PC-9 (cell line): ENCODE measurements at regions of chr1 and their contacts with region 1.

Region 1: DNA sequence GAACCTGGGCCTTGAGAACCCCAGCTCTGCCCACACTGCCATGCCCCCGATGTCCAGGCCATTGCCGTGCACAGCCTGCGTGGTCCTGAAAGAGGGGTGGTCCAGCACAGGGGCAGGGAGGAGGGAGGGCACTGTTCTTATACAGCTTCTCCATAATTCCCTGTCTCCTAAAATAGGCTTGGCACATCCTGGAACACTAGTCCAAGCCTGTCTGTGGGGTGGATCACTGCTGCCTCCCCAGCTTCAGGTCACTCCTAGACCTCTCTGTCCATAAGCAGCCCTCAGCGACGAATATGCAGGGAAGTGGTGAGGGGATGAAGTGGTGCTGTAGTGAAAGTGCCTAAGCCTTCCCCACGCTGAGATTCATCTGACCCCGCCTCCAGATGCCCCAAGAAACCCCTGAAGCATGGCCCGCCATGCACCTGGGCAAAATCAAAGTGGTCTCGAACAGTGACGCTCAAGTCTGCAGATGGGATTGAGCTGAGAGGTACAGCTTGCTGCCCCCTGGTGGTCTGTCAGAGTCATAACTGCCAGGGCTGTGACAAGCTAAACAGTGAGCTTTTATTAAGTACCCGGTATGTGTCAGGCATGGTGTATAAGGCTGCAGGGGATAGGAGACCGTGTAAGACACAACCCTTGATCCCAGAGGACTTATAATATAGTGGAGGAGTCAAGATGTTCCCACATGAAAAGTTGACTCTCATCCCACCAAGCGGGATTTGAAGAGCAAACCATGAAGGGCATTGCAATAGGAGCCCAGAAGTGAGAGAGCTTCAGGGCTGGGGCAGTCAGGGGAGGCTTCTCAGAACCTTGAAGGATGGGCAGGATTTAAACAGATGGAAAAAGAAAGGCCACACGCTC is 66.6 kb downstream of the FAM163A start:
- DNase-seq: peak; percentile 46 to 53
- H3K4me3 ChIP-seq: no peak overlapping the region
- H3K27ac ChIP-seq: no peak overlapping the region
- H3K4me1 ChIP-seq: no peaks in the 10 kb centered on the region
- H3K27me3 ChIP-seq: peaks cover 46% of the 10 kb centered on the region
- CTCF ChIP-seq: peak; percentile 93

Region 2: DNA sequence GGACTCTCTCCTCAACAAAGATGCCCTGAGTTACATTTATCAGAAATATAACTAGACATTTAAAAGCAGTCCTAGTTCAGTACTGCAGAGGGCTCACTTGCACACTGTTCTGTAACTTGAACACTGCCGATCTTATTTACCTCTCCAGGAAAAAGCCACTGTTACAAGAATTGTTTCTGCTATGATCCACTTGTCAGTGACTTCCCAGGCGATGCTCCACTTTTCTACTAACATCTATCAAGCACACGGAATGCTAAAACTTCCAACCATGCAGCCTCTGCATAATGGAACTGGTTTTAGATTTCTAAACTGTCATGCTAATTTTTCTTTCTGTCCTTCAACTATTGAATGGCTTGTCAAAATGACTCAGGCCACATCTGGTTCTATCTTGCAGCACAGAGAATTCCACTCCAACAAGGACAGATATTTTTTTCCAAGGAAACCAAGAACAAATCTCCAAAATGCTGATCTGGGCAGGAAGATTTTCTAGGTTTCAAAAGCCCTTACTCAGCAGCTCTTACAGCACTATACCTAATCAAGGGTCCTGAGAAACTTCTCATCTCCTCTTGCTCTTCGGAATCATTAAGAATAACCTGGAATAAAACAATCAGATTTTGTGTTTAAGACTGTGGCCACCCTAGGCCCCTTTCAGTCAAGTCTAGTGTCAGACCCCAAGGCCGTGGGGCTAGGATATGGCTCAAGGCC is 1849.8 kb before region 1 on chr1:
- CTCF ChIA-PET with region 1: interaction called, 13 read pairs
- POLR2A ChIA-PET with region 1: no interaction called
- intact Hi-C with region 1: no loop called
- DNase-seq: no peak
- H3K4me3 ChIP-seq: no peak overlapping the region
- H3K27ac ChIP-seq: no peak overlapping the region
- H3K4me1 ChIP-seq: no peaks in the 10 kb centered on the region
- H3K27me3 ChIP-seq: no peaks in the 10 kb centered on the region
- CTCF ChIP-seq: peak; percentile 63

Region 3: DNA sequence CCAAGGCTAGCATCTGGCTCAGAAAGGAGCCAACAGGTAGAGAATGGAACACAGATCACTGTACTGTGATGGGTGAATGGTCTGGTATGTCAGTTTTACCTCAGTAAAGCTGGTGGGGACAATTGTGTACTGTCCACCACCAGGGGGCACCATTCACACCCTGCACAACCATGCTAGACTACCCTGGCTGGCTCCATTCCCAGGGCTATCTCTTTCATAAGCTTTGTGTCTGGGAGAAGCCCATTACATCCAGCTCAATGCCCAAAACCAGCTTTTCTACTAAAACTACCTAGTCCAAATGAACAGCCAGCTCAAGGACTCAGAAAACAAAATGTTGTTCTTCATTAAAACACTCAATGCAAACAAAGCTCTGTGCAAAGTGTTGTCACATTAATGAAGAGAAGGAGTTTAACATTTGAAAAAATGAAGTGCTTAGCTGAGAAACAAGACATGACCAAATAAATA is 1777.8 kb before region 1 on chr1:
- CTCF ChIA-PET with region 1: interaction called, 11 read pairs
- POLR2A ChIA-PET with region 1: no interaction called
- intact Hi-C with region 1: no loop called
- DNase-seq: peak; percentile 86 to 87
- H3K4me3 ChIP-seq: no peak overlapping the region
- H3K27ac ChIP-seq: peak overlapping the region; percentile 46
- H3K4me1 ChIP-seq: peaks cover 20% of the 10 kb centered on the region
- H3K27me3 ChIP-seq: no peaks in the 10 kb centered on the region
- CTCF ChIP-seq: peak; percentile 91

Region 4: DNA sequence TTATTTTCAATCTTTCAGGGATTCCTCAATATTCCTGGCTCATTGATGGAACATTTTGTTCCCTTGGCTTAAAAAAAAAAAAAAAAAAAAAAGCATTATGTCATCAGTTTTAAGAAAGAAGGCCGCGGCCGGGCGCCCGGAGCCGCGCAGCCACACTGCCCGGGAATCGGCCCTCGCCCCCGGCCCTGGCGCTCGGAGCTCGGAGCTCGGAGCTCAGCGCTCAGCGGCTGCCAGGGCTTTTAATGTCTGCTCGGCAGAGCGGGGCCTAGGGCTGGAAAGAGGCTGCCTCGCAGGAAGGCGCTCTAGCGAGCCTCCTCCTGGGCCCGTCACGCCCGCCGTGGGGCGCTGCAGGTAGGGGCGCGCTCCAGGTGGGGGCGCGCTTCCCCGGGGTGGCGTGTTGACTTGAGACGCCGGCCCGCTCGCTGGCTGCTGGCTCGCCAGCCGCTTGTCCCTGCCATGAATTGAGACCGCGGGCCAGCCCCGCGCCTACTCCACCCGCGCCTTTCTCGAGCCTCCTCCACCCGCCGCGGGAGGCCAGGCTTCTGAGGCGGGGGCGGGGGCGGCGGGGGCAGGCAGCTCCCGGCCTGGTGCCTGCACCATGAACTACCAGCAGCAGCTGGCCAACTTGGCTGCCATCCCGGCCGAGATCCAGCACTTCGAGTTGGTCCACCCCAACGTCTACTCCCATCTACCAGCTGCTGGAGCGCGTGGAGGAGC is 223.5 kb before region 1 on chr1:
- CTCF ChIA-PET with region 1: interaction called, 10 read pairs
- POLR2A ChIA-PET with region 1: no interaction called
- intact Hi-C with region 1: no loop called
- DNase-seq: peak in 1 of 2 experiments; percentile 69
- H3K4me3 ChIP-seq: peak overlapping the region; percentile 55
- H3K27ac ChIP-seq: no peak overlapping the region
- H3K4me1 ChIP-seq: no peaks in the 10 kb centered on the region
- H3K27me3 ChIP-seq: peaks cover 27% of the 10 kb centered on the region
- CTCF ChIP-seq: peak; percentile 58

Region 5: DNA sequence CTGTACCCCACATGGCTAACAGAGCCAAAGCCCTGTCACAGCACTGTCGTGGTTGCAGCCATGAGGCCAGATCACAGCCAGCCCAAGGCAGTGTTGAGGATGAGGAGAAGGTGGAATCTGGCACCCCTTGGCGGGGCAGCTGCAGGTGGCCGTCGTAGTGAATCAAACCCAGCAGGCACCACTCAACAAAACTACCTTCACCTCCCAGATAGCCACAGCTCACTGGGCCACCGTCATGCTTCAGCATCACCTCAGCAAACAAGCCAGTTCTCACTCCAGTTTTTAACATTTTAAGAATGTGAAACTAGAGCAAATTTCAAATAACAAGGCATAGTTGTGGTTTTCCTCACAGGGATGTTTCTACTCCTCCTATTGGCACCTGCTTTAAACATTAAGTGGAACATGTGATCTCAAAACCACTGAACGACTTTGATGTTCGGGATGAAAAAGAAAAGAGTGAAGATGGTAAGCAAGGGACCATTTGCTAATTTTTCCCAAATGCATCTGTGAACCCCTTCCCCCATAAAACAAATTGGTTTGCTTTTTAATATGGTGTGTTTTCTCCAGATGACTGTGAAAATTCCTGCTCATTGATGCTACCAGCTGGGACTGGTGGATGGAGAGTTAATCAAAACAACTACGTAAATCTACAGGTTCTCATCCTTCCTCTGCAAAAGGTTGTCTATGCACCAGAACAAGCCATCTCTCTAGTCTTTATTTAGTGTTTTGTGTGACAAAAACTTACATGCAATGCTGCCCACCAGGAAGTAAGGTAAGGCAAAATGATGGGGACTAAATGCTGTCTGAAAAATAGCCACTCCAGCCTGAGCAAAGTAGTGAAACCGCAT is 22.3 kb after region 1 on chr1:
- CTCF ChIA-PET with region 1: interaction called, 13 read pairs
- POLR2A ChIA-PET with region 1: interaction called, 4 read pairs
- intact Hi-C with region 1: no loop called
- DNase-seq: no peak
- H3K4me3 ChIP-seq: no peak overlapping the region
- H3K27ac ChIP-seq: no peak overlapping the region
- H3K4me1 ChIP-seq: 0 out of 2 replicates have a peak, but pooled peaks cover 3% of the 10 kb centered on the region
- H3K27me3 ChIP-seq: peaks cover 7% of the 10 kb centered on the region; the same call in 1 of the 2 replicates
- CTCF ChIP-seq: no peak

Region 6: DNA sequence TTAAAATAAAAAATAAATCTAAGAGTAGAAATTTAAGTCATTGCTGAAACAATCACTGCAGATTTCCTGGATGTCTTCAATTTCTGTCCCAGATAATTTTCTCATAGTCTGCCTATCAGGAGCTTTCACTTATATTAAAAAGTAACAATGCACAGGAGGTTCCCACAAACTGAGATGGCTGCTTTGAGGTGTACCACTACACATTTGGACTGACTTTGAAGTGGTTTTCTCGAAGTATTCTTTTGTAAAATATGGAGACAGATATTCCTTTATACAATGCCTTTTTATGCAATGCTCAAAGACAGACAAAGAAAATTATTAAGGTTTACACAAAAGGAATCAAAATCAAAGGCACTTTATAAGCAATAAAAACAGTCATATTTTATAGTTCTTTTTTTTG is 43.4 kb after region 1 on chr1:
- CTCF ChIA-PET with region 1: no interaction called
- POLR2A ChIA-PET with region 1: no interaction called
- intact Hi-C with region 1: no loop called
- DNase-seq: no peak
- H3K4me3 ChIP-seq: no peak overlapping the region
- H3K27ac ChIP-seq: no peak overlapping the region
- H3K4me1 ChIP-seq: no peaks in the 10 kb centered on the region
- H3K27me3 ChIP-seq: no peaks in the 10 kb centered on the region
- CTCF ChIP-seq: no peak